Posterior vena cava (tissue), 2 donors: ENCODE measurements at regions of chr21 and their contacts with region 1.

Region 1: DNA sequence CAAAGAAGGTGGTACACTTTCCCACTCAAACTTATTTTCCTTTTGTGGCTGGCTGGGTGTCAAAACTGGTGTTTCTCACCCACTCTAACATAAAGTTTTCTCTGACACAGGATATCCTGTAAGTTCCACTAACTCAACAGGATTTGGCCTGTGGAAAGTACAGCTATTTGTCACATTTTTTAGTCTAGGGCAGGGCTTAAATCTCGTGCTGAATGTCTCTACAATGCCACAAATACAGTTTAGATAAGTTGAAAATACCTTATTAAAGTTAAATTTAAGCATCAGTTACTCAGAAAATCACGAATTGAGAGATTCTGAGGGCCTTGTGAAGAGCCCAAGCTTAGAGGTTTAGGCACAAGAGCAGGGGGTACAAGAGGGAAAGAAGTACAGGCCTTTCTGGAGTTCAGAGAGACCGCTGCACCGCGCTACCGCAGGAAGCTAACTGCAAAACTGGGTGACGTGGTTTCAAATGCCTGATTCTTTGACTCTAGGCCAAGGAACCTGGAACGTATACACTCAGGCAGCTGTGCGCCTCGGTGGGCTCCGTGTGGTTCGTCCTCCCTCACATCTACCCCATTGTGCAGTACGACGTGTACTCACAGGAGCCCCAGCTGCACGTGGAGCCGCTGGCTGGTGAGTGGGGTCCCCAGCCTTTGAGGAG is 23.4 kb upstream of the PWP2 start:
- DNase-seq: peak; percentile 67

Region 2: DNA sequence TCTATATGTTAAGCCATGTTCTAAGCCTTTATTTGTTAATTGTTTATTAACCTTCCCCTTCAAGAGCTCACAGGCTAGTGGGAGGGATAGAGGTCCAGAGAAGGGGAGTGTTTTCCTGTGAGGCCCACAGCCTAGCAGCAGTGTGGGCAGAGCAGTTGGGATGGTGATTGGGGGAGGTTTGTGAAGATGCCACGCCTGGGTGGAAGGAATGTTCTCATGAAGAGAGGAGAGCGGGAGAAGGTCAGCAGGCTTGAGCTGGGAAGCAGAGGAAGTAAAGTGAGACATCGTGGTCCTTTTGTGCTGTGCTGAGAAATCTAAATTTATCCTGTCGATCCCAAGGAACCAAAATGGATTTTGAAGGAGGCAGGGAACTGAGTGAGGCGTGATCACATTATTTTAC is 29.1 kb before region 1 on chr21:
- intact Hi-C with region 1: loop called in 1 of 2 experiments (anchors 2 kb)
- DNase-seq: no peak

Region 3: DNA sequence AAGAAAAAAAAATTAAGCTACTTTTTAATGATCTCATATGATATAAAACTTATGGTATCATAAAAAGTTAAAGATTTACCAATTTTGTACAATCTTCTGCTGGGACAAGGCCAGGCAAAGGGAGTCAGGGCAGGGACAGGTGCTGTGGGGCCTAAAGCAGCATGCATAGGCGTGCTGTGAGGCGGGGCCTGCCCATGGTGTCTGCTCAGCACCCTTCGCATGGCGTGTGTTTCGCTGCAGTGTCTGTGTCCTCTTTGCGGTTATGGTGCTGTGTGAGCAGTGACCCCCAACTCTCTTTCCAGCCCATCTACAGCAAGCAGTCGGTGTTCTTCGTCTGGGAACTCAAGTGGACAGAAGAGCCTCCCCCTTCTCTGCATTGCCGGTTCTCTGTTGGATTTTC is 10.0 kb after region 1 on chr21:
- intact Hi-C with region 1: no loop called
- DNase-seq: peak; percentile 41